ENCODE measurements at regions of chr19 and their contacts with region 1.

Region 1: DNA sequence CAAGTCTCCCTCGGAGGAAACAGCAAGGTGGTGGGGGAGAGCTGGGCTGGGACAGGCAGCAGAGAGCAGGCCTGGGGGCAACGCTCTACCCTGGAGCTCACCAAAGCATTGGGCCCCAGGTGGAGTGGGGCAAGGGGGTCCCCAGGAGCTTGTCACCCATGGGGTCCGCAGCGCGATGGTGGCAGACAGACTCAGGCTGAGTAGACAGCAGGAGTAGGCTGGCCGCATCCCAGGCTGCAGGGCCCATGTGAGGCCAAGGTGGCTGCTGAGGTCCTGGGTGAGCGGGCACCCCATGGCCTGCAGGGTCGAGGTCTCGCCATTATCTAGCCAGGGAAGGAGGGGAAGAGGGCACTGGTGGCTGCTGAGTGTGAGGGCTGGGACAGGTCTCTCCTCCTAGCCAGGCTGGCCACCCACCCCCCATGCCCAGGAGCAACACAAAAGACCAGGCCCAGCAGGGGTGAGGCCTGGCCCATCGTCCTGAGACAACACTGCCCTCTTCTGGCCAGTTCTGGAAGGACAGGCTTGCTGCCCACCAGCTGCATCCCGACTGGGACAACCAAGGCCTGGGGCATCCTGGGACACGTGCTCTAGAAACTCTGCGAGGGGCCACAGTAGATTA is 33.1 kb downstream of the CEBPG start:
- DNase-seq: peak; percentile 79
- ATAC-seq: peak; percentile 76

Region 2: DNA sequence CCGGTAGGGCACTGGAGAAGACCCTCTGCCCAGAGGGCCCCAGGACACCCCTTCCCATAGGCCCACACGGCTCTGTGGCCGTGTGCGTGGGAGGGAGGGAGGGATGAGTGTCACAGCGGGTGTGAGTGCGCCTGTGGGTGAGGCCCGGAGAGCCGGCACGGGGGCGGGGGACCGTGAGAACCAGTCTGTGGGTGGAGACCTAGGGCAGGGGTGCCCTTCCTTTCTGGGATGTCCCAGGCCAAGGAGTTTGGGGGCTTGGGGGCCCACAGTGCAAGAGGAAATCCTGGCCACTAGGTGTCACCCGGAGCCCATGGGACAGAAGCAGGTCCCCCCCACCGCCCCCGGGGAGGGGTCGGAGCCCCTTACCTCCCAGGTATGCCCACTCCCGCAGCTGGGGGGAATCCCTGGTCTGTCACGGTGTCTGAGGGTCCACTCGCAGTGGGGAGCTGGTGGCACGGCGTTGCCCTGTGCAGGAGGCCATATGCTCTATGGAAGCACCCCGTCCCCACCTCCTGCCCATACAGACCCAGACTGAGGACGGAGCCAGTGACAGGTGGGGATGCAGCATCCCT is 165.0 kb before region 1 on chr19:
- intact Hi-C with region 1: loop called (anchors 5 kb)
- DNase-seq: peak; percentile 33
- ATAC-seq: peak; percentile 60

Region 3: GRCh38 chr19:33311326-33311682 is 95.3 kb before region 1 on chr19:
- intact Hi-C with region 1: no loop called
- DNase-seq: no peak
- ATAC-seq: no peak

Region 4: DNA sequence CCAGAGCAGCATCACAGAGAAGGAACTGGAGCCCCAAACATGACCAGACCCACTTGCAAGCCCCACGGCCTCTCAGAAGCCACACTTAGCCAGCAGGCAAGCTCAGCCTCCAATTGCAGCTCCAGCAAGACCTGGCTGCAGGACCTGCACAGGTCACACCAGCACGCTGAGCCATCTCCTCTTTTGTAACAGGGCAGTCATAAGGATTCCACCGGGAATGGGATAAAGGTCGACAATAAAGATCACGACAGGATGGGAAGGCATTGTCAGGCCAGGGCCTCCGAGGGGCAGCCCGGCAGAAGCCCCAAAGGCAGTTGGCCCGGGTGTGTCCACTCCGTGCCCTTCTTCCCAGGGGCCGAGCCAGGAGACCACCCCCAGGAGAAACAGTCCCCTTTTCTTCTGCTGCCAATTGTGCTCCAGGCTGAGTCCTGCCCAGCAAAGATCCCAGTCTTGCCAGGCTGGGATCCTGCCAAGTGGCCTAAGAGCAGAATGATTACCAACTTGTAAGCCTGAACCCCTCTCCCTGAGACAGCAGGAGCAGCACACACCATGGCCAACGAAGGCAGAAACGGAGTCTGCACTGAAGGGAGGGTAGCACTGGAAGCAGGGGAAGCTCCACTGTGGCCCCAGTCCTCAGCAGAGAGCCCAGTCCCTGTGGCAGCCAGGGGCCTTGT is 102.4 kb after region 1 on chr19:
- intact Hi-C with region 1: no loop called
- DNase-seq: no peak
- ATAC-seq: no peak

Measured in left ventricle myocardium superior (tissue), 1 donor.